ENCODE measurements at regions of chr15 and their contacts with region 1.

Region 1: GRCh38 chr15:25189551-25189950 is 234.8 kb downstream of the SNRPN start:
- DNase-seq: no peak
- ATAC-seq: no peak
- H3K4me3 ChIP-seq: no peak overlapping the region
- H3K27ac ChIP-seq: no peak overlapping the region
- H3K4me1 ChIP-seq: no peaks in the 10 kb centered on the region
- H3K27me3 ChIP-seq: no peaks in the 10 kb centered on the region
- CTCF ChIP-seq: no peak

Region 2: GRCh38 chr15:24976932-24977331 is 212.6 kb before region 1 on chr15:
- intact Hi-C with region 1: no loop called
- DNase-seq: no peak
- ATAC-seq: no peak
- H3K4me3 ChIP-seq: no peak overlapping the region
- H3K27ac ChIP-seq: no peak overlapping the region
- H3K4me1 ChIP-seq: no peaks in the 10 kb centered on the region
- H3K27me3 ChIP-seq: no peaks in the 10 kb centered on the region
- CTCF ChIP-seq: peak in 1 of 9 donors; percentile 18

Region 3: GRCh38 chr15:25092661-25093060 is 96.9 kb before region 1 on chr15:
- intact Hi-C with region 1: no loop called
- DNase-seq: no peak
- ATAC-seq: no peak
- H3K4me3 ChIP-seq: no peak overlapping the region
- H3K27ac ChIP-seq: peak overlapping the region in 3 of 10 donors; percentile 23 to 37 (median 25)
- H3K4me1 ChIP-seq: peaks cover 0 to 6% (median 0%) of the 10 kb centered on the region in 9 donors
- H3K27me3 ChIP-seq: no peaks in the 10 kb centered on the region
- CTCF ChIP-seq: no peak

Region 4: DNA sequence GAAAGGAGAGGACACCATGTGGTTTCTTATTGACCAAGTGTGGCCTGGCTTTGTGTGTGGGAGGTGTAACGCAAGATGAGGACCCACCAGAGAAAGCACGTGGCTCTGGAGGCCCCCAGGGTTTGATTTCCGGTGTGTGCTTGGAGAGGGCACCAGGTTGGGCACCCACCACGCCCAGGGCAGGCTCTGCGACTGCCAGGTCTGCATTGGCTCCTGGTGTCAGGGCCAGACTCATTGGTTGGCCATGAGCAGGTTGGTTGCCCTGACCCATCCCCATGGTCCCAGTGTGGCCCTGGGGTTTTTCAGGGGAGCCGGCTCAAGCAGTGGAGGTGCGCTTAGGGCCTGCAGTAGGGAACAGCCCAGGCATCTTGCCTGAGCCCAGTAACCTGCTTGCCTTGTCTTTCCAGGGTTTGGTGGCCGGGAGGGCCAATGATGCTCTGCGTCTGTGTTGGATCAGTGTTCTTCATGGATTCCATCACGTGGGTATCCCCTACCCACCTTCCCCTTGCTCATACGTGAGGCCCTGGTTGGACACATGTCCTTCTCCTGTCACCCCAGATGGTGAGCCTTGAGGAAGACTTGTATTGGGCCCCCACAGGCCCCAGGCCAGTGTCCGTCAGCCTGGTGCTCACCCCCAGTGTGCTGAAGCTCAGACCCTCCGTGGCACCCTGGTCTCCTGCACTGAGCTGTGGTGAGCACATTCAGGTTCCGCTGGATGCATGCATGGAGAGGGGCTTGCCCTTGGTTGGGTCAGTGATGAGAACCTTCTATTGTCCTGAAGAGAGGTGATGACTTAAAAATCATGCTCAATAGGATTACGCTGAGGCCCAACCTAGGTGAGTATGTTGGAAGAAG is 55.4 kb after region 1 on chr15:
- intact Hi-C with region 1: loop called in 1 of 10 experiments (anchors 10 kb)
- DNase-seq: peak; percentile 1 to 3
- ATAC-seq: no peak
- H3K4me3 ChIP-seq: no peak overlapping the region
- H3K27ac ChIP-seq: no peak overlapping the region
- H3K4me1 ChIP-seq: no peaks in the 10 kb centered on the region
- H3K27me3 ChIP-seq: no peaks in the 10 kb centered on the region
- CTCF ChIP-seq: no peak

Region 5: DNA sequence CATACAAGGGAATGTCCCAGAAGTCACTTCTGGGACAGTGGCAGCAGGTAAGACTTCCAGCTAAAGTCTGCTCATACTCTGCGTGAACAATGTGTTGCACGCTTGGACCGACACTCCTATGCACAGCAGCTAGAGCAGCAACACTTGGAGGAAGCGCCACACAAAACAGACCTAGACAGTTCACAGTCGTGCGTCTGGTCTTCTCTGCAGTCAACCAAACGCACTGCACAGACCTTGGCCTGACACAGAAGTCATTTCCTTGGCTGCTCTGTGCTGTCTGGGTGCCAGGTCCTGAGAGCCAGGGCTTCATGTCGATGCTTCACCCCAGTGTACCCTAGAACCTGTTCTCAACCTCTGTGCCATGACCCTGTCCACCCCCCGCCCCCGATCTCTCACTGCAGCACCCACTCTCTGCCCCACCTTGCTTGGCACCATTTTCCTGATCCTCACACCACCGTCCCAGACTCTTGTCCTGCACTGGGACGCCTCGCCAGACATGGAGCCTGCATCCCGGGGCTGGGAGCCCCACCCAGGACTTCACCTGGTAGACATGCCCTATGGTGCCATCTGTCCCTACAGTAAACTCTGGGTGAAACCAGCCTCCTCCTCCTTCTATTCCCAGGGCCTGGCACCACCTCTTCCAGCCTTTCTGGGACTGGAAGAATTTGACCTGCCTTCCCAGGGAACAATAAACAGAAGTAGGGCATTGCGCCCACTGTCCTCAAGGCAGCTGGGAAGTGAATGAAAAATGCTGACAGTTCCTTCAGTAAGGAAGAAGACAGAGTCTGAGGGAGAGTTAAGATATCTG is 670.5 kb after region 1 on chr15:
- intact Hi-C with region 1: no loop called
- DNase-seq: no peak
- ATAC-seq: peak in 4 of 8 donors; percentile 19 to 52 (median 32)
- H3K4me3 ChIP-seq: peak overlapping the region in 2 of 10 donors; percentile 64 to 66
- H3K27ac ChIP-seq: peak overlapping the region in 4 of 10 donors; percentile 15 to 73 (median 32)
- H3K4me1 ChIP-seq: peaks cover 0 to 44% (median 21%) of the 10 kb centered on the region in 9 donors
- H3K27me3 ChIP-seq: peaks cover 0 to 52% (median 41%) of the 10 kb centered on the region in 7 donors
- CTCF ChIP-seq: no peak